ENCODE measurements at regions of chr2 and their contacts with region 1.

Region 1: GRCh38 chr2:10448208-10448645 is at the start of gene ODC1:
- DNase-seq: peak; percentile 97 to 99 (median 98)
- ATAC-seq: peak; percentile 83 to 84
- H3K4me3 Mint-ChIP-seq: peak within 1 kb of the TSS; percentile 72 to 95 (median 86)
- H3K27ac Mint-ChIP-seq: peak within 1 kb of the TSS; percentile 82 to 95 (median 90)
- H3K4me1 Mint-ChIP-seq: peaks cover 19 to 43% (median 35%) of the 10 kb centered on the region in 4 donors
- H3K27me3 Mint-ChIP-seq: no peaks in the 10 kb centered on the region
- polyA plus RNA-seq, gene ODC1: 44.5 to 70.7 (median 60.9) TPM

Region 2: DNA sequence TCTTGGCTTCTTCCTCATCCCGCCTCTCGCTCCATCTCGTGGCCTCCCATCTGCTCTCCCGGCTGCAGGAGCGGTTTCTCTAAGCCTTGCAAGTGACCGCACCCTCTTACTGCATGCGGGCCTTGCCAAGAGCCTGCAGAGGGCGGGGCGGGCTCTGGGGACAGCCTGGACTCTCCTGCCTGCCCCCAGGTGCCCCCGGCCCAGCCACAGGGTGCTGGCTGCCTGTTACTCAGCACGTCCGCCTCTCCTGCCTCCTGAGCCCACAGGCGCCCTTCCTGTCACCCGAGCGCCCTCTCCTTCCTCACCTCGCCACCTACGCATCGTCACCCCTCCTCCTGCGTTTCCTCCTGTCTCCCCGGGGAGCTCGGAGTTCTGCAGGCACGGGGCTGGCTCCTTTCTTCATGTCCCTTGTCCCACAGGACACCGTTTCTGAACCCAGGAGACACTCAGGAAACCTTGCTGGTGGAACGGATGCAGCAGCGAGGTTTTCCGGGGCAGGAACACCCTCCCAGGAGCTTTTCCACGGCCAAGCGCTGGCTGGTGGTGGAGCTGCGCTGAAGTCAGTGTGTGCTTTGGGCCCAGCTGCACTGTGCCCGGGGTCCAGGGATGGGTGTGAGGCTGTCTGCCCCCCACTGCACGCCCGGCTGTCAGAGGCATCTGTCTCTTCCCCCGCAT is 117.1 kb before region 1 on chr2:
- POLR2A ChIA-PET with region 1: interaction called, 15 read pairs
- DNase-seq: peak; percentile 56 to 78 (median 65)
- ATAC-seq: peak; percentile 44 to 57
- H3K4me3 Mint-ChIP-seq: peak overlapping the region; percentile 87 to 100 (median 92)
- H3K27ac Mint-ChIP-seq: peak overlapping the region; percentile 94 to 99 (median 98)
- H3K4me1 Mint-ChIP-seq: peaks cover 65 to 94% (median 85%) of the 10 kb centered on the region in 4 donors
- H3K27me3 Mint-ChIP-seq: no peaks in the 10 kb centered on the region

Region 3: DNA sequence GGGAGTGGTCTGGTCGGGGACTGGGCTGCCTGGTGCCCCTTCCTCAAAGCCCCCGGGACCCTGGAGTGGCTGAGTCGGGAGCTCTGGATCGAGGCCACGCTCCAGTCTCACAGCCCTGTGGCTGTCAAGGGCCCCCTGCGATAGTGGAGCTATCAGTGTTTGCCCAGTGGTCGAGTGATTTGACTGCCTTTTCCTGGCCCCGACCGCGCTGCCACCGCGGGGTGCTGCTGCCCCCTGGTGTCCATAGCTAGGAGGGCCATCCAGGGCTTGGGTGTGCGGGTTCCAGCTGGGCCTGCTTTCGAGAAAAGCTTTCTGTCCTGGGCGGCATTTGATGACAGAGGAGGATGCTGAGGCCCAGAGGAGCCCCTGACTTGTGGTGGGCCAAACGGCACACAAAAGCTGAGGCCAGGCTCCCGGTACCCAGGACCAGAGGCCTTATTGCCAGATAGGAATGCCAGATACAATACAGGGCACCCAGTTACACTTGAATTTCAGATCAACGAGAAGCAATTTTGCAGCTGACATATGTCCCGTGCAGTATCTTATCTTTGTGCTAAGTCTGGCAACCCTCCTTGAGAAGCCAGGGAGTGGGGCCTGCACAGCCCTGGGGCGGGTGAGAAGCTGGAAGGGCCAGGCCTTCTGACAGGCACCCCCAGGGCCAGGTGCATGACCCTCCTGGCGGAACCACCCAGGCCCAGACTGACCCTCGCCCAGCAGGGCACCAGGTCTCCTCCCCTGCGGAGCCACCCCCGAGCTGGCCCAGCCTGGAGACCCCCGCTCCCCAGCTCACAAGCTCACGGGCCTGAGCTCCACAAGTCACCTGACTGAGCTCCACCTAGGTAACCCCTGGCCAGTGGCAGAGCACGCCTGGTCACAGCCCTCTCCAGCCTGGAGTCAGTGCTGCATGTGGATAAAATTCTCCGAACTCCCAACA is 13.1 kb before region 1 on chr2:
- POLR2A ChIA-PET with region 1: interaction called, 16 read pairs
- DNase-seq: peak; percentile 34 to 79 (median 70)
- ATAC-seq: peak; percentile 51 to 52
- H3K4me3 Mint-ChIP-seq: peak overlapping the region in 5 of 10 donors; percentile 18 to 53 (median 48)
- H3K27ac Mint-ChIP-seq: peak overlapping the region in 2 of 10 donors; percentile 30 to 57
- H3K4me1 Mint-ChIP-seq: peaks cover 12 to 29% (median 16%) of the 10 kb centered on the region in 4 donors
- H3K27me3 Mint-ChIP-seq: peaks cover 0 to 21% (median 3%) of the 10 kb centered on the region in 5 donors

Region 4: GRCh38 chr2:10467401-10467800 is 19.2 kb after region 1 on chr2:
- POLR2A ChIA-PET with region 1: no interaction called
- DNase-seq: no peak
- ATAC-seq: no peak
- H3K4me3 Mint-ChIP-seq: no peak overlapping the region
- H3K27ac Mint-ChIP-seq: no peak overlapping the region
- H3K4me1 Mint-ChIP-seq: no peaks in the 10 kb centered on the region
- H3K27me3 Mint-ChIP-seq: peaks cover 0 to 9% (median 2%) of the 10 kb centered on the region in 5 donors

Region 5: GRCh38 chr2:10493636-10494281 is 45.5 kb after region 1 on chr2:
- POLR2A ChIA-PET with region 1: interaction called, 26 read pairs
- DNase-seq: peak; percentile 31 to 91 (median 66)
- ATAC-seq: peak; percentile 96 to 98
- H3K4me3 Mint-ChIP-seq: peak overlapping the region in 7 of 10 donors; percentile 14 to 68 (median 26)
- H3K27ac Mint-ChIP-seq: peak overlapping the region in 9 of 10 donors; percentile 48 to 92 (median 82)
- H3K4me1 Mint-ChIP-seq: peaks cover 1 to 36% (median 26%) of the 10 kb centered on the region in 4 donors
- H3K27me3 Mint-ChIP-seq: peaks cover 4 to 12% (median 9%) of the 10 kb centered on the region in 5 donors

Measured in naive thymus-derived CD8-positive, alpha-beta T cell (primary cell).